Breast epithelium (tissue), 4 donors: ENCODE measurements at regions of chr13 and their contacts with region 1.

Region 1: GRCh38 chr13:40069173-40070044 is 413.9 kb downstream of the COG6 start:
- DNase-seq: peak; percentile 65 to 75
- H3K4me3 ChIP-seq: no peak overlapping the region
- H3K27ac ChIP-seq: no peak overlapping the region
- H3K4me1 ChIP-seq: no peaks in the 10 kb centered on the region
- H3K27me3 ChIP-seq: no peaks in the 10 kb centered on the region
- CTCF ChIP-seq: peak; percentile 82 to 88 (median 84)
- POLR2A ChIP-seq: no peak

Region 2: DNA sequence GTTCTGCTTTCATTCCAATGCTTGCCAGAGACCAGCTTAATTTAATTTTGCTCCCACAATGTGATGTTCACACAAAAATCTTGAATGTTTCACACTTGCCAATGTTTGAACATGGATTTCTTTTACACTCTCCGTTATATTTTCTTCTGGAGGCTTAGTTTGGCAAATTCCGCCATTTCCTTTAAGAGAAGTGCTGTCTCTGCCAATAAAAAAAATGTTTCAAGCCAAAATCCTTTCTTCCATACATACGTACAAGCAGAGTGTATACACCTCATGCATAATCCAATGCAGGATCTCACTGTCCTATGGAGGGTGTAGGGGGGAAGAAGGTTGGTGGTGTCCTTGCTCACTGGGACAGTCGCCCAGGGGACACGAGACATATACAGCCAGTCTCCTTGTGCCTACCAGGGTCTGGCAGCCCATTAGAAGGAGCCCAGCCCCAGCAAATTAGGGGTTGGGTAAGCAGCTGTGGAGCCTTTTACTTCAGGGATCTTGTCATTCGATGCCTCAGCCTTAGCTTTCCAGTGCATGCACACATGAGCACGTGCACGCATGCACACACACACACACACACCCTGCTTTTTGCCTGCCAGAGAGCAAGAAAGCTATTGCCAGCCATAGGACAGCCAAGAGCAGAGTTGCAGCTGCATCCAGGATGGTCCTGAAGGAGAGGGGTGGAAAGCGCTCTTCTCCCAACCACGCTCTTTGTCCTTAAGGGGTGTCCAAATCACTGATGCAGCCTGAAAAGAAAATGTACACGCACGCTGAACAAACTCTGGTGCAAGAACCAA is 388.7 kb after region 1 on chr13:
- intact Hi-C with region 1: loop called (anchors 5 kb)
- DNase-seq: no peak
- H3K4me3 ChIP-seq: no peak overlapping the region
- H3K27ac ChIP-seq: no peak overlapping the region
- H3K4me1 ChIP-seq: no peaks in the 10 kb centered on the region
- H3K27me3 ChIP-seq: no peaks in the 10 kb centered on the region
- CTCF ChIP-seq: no peak
- POLR2A ChIP-seq: no peak